B cell (primary cell): ENCODE measurements at regions of chr9 and their contacts with region 1.

Region 1: DNA sequence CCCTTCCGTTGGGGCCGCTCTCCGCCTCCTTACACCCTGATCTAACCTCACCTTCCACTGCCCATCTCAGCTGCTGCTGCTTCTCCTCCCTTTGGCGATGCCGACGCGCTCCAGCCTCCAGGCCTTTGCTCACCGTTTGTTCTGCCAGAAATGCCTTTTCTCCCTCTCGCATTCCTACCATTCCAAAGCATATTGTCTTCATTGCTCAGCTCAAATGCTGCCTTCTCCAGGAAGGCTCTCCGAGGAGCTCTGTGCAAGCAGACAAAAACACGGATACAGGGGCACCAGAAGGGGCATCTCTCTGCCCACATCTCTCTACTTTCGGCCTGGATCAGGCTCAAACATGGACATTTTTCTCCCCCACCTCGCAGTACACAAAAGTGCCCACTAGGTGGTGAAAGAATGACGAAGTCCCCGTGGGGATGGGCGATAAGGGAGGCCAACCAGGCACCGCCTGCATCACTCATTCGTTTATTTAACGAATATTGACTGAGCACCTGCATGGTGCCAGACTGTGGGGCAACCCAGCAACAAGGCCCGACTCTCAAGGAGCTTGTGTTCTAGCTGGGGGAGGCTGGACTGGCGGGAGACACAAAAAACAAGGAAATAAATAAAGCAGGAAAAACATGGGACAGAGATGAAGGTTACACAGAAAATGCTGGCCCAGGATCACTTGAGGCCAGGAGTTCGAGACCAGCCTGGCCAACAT is 7.3 kb upstream of the GRHPR start:
- DNase-seq: peak; percentile 86
- ATAC-seq: peak; percentile 84
- H3K4me3 ChIP-seq: no peak overlapping the region
- H3K4me3 Mint-ChIP-seq: peak overlapping the region; percentile 67
- H3K27ac ChIP-seq: no peak overlapping the region
- H3K27ac Mint-ChIP-seq: peak overlapping the region; percentile 79
- H3K4me1 ChIP-seq: peaks cover 32 to 45% of the 10 kb centered on the region in 2 donors
- H3K4me1 Mint-ChIP-seq: peaks cover 42% of the 10 kb centered on the region
- H3K27me3 ChIP-seq: no peaks in the 10 kb centered on the region
- H3K27me3 Mint-ChIP-seq: no peaks in the 10 kb centered on the region
- CTCF ChIP-seq: peak; percentile 83

Region 2: GRCh38 chr9:37390759-37391158 is 24.4 kb before region 1 on chr9:
- CTCF ChIA-PET with region 1: interaction called, 16 read pairs
- POLR2A ChIA-PET with region 1: interaction called, 5 read pairs
- intact Hi-C with region 1: no loop called
- DNase-seq: peak; percentile 79
- ATAC-seq: peak; percentile 66
- H3K4me3 ChIP-seq: no peak overlapping the region
- H3K4me3 Mint-ChIP-seq: peak overlapping the region; percentile 56
- H3K27ac ChIP-seq: peak overlapping the region in 1 of 2 donors; percentile 52
- H3K27ac Mint-ChIP-seq: peak overlapping the region; percentile 60
- H3K4me1 ChIP-seq: peaks cover 30 to 48% of the 10 kb centered on the region in 2 donors
- H3K4me1 Mint-ChIP-seq: peaks cover 55% of the 10 kb centered on the region
- H3K27me3 ChIP-seq: no peaks in the 10 kb centered on the region
- H3K27me3 Mint-ChIP-seq: no peaks in the 10 kb centered on the region
- CTCF ChIP-seq: peak; percentile 58

Region 3: GRCh38 chr9:37432000-37432399 is 16.8 kb after region 1 on chr9:
- CTCF ChIA-PET with region 1: interaction called, 5 read pairs
- POLR2A ChIA-PET with region 1: interaction called, 3 read pairs
- intact Hi-C with region 1: loop called (anchors 1 kb)
- DNase-seq: no peak
- ATAC-seq: peak; percentile 71
- H3K4me3 ChIP-seq: no peak overlapping the region
- H3K4me3 Mint-ChIP-seq: peak overlapping the region; percentile 47
- H3K27ac ChIP-seq: peak overlapping the region; percentile 10 to 27
- H3K27ac Mint-ChIP-seq: peak overlapping the region; percentile 86
- H3K4me1 ChIP-seq: peaks cover 16 to 26% of the 10 kb centered on the region in 2 donors
- H3K4me1 Mint-ChIP-seq: peaks cover 21% of the 10 kb centered on the region
- H3K27me3 ChIP-seq: no peaks in the 10 kb centered on the region
- H3K27me3 Mint-ChIP-seq: no peaks in the 10 kb centered on the region
- CTCF ChIP-seq: no peak